CD8-positive, alpha-beta T cell (primary cell): ENCODE measurements at regions of chr10 and their contacts with region 1.

Region 1: GRCh38 chr10:54554028-54554427 is 247.0 kb downstream of the PCDH15 start:
- DNase-seq: no peak
- ATAC-seq: no peak
- H3K4me3 ChIP-seq: no peak overlapping the region
- H3K4me3 Mint-ChIP-seq: no peak overlapping the region
- H3K27ac ChIP-seq: no peak overlapping the region
- H3K27ac Mint-ChIP-seq: no peak overlapping the region
- H3K4me1 ChIP-seq: no peaks in the 10 kb centered on the region
- H3K4me1 Mint-ChIP-seq: no peaks in the 10 kb centered on the region
- H3K27me3 ChIP-seq: no peaks in the 10 kb centered on the region
- H3K27me3 Mint-ChIP-seq: no peaks in the 10 kb centered on the region
- CTCF ChIP-seq: no peak

Region 2: GRCh38 chr10:53827261-53827660 is 726.8 kb before region 1 on chr10:
- CTCF ChIA-PET with region 1: no interaction called
- POLR2A ChIA-PET with region 1: no interaction called
- intact Hi-C with region 1: loop called in 1 of 2 experiments (anchors 5 kb)
- DNase-seq: no peak
- ATAC-seq: no peak
- H3K4me3 ChIP-seq: no peak overlapping the region
- H3K4me3 Mint-ChIP-seq: no peak overlapping the region
- H3K27ac ChIP-seq: no peak overlapping the region
- H3K27ac Mint-ChIP-seq: no peak overlapping the region
- H3K4me1 ChIP-seq: no peaks in the 10 kb centered on the region
- H3K4me1 Mint-ChIP-seq: no peaks in the 10 kb centered on the region
- H3K27me3 ChIP-seq: no peaks in the 10 kb centered on the region
- H3K27me3 Mint-ChIP-seq: no peaks in the 10 kb centered on the region
- CTCF ChIP-seq: no peak

Region 3: GRCh38 chr10:54148506-54148905 is 405.5 kb before region 1 on chr10:
- CTCF ChIA-PET with region 1: no interaction called
- POLR2A ChIA-PET with region 1: no interaction called
- intact Hi-C with region 1: no loop called
- DNase-seq: no peak
- ATAC-seq: no peak
- H3K4me3 ChIP-seq: no peak overlapping the region
- H3K4me3 Mint-ChIP-seq: no peak overlapping the region
- H3K27ac ChIP-seq: no peak overlapping the region
- H3K27ac Mint-ChIP-seq: no peak overlapping the region
- H3K4me1 ChIP-seq: no peaks in the 10 kb centered on the region
- H3K4me1 Mint-ChIP-seq: no peaks in the 10 kb centered on the region
- H3K27me3 ChIP-seq: no peaks in the 10 kb centered on the region
- H3K27me3 Mint-ChIP-seq: no peaks in the 10 kb centered on the region
- CTCF ChIP-seq: no peak

Region 4: DNA sequence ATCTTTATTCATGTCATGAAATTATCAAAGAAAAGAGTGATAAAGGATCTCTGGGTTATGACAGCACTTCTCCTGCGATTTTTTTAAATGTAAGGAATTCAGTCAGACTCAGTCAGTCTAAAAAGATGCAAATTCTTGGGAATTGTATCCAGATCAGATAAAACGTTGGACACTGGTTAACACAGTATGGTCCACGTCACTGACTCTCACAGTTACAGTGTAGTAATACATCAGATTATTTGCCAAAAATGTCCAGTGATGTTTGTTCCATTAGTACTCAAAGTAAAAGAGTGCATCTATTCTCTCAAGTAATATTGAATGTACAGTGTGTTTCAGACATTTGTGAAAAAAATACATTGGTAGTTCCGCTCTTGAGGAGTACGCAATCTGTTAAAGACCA is 22.5 kb after region 1 on chr10:
- CTCF ChIA-PET with region 1: no interaction called
- POLR2A ChIA-PET with region 1: no interaction called
- intact Hi-C with region 1: no loop called
- DNase-seq: no peak
- ATAC-seq: no peak
- H3K4me3 ChIP-seq: no peak overlapping the region
- H3K4me3 Mint-ChIP-seq: no peak overlapping the region
- H3K27ac ChIP-seq: no peak overlapping the region
- H3K27ac Mint-ChIP-seq: no peak overlapping the region
- H3K4me1 ChIP-seq: no peaks in the 10 kb centered on the region
- H3K4me1 Mint-ChIP-seq: no peaks in the 10 kb centered on the region
- H3K27me3 ChIP-seq: no peaks in the 10 kb centered on the region
- H3K27me3 Mint-ChIP-seq: no peaks in the 10 kb centered on the region
- CTCF ChIP-seq: no peak